IMR-90 (cell line): ENCODE measurements at regions of chr3 and their contacts with region 1.

Region 1: GRCh38 chr3:45037734-45038455 is 11.8 kb downstream of the CLEC3B start:
- DNase-seq: peak; percentile 93
- ATAC-seq: peak; percentile 70
- H3K4me3 ChIP-seq: no peak overlapping the region
- H3K27ac ChIP-seq: no peak overlapping the region
- H3K4me1 ChIP-seq: peaks cover 20% of the 10 kb centered on the region
- H3K27me3 ChIP-seq: no peaks in the 10 kb centered on the region
- CTCF ChIP-seq: peak; percentile 98
- POLR2A ChIP-seq: 0 out of 2 replicates have a peak, but pooled peaks have one; percentile 44
- RAD21 ChIP-seq: peak; percentile 98

Region 2: GRCh38 chr3:45210308-45211041 is 172.6 kb after region 1 on chr3:
- CTCF ChIA-PET with region 1: interaction called, 23 read pairs
- POLR2A ChIA-PET with region 1: no interaction called
- dilution Hi-C with region 1: no loop called
- in situ Hi-C with region 1: no loop called
- intact Hi-C with region 1: loop called (anchors 1 kb)
- DNase-seq: peak; percentile 80
- ATAC-seq: peak; percentile 94
- H3K4me3 ChIP-seq: no peak overlapping the region
- H3K27ac ChIP-seq: peak overlapping the region; percentile 53
- H3K4me1 ChIP-seq: peaks cover 16% of the 10 kb centered on the region
- H3K27me3 ChIP-seq: no peaks in the 10 kb centered on the region
- CTCF ChIP-seq: peak; percentile 87
- POLR2A ChIP-seq: no peak
- RAD21 ChIP-seq: peak; percentile 92

Region 3: GRCh38 chr3:45499529-45499928 is 461.6 kb after region 1 on chr3:
- CTCF ChIA-PET with region 1: interaction called, 4 read pairs
- POLR2A ChIA-PET with region 1: no interaction called
- dilution Hi-C with region 1: loop called (anchors 25 kb)
- in situ Hi-C with region 1: no loop called
- intact Hi-C with region 1: loop called (anchors 1 kb)
- DNase-seq: peak; percentile 66
- ATAC-seq: peak; percentile 44; the same call in 1 of the 2 replicates
- H3K4me3 ChIP-seq: no peak overlapping the region
- H3K27ac ChIP-seq: no peak overlapping the region
- H3K4me1 ChIP-seq: peaks cover 2% of the 10 kb centered on the region; the same call in 1 of the 2 replicates
- H3K27me3 ChIP-seq: no peaks in the 10 kb centered on the region
- CTCF ChIP-seq: peak; percentile 72
- POLR2A ChIP-seq: no peak
- RAD21 ChIP-seq: peak; percentile 69

Region 4: GRCh38 chr3:45929042-45929679 is 891.3 kb after region 1 on chr3:
- CTCF ChIA-PET with region 1: no interaction called
- POLR2A ChIA-PET with region 1: no interaction called
- dilution Hi-C with region 1: no loop called
- in situ Hi-C with region 1: loop called (anchors 10 kb)
- intact Hi-C with region 1: loop called (anchors 1 kb)
- DNase-seq: peak; percentile 26
- ATAC-seq: peak; percentile 93
- H3K4me3 ChIP-seq: no peak overlapping the region
- H3K27ac ChIP-seq: no peak overlapping the region
- H3K4me1 ChIP-seq: peaks cover 8% of the 10 kb centered on the region
- H3K27me3 ChIP-seq: no peaks in the 10 kb centered on the region
- CTCF ChIP-seq: peak; percentile 79
- POLR2A ChIP-seq: no peak
- RAD21 ChIP-seq: peak; percentile 93